ENCODE measurements at regions of chr10 and their contacts with region 1.

Region 1: GRCh38 chr10:72331601-72332422 is 22.9 kb downstream of the DNAJB12 start:
- DNase-seq: peak; percentile 98
- H3K4me3 ChIP-seq: no peak overlapping the region
- H3K27ac ChIP-seq: peak overlapping the region; percentile 98
- H3K4me1 ChIP-seq: peaks cover 82% of the 10 kb centered on the region
- H3K27me3 ChIP-seq: no peaks in the 10 kb centered on the region
- CTCF ChIP-seq: peak in 1 of 2 donors; percentile 34

Region 2: DNA sequence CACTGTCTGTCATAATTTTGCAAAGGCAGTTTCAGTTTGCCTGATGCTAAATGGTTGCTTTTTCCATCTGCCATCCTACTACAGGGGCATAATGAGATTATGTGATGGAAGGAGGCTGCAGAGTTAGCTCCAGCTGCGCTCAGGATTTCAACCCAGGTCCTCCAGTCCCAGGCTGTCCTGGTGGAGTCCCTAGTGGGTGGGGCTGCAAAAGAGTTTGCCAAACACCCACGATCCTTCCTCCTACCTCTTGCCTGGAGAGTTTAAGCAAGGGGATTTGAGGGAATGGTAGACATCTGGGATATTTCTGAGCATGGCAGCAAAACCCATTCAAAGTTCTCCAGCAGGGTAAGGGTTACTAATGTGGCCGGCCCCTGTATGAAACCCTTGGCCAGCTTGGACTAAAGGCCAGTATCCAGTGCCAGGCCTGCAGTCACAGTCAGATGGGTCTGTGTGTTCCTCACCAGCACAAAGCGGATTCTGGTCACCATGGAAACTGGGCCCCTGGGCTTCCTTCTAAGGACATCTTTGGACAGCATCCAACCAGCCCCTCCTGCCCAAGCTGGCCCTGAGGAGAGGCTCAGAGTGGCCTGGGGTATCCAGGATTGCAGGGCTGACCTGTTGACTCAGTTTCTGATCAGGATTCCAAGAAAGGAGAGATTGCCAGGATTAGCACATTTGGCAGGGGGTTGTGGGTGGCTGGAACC is 410.3 kb before region 1 on chr10:
- CTCF ChIA-PET with region 1: no interaction called
- dilution Hi-C with region 1: no loop called
- in situ Hi-C with region 1: loop called in 1 of 2 experiments (anchors 25 kb)
- intact Hi-C with region 1: no loop called
- DNase-seq: no peak
- H3K4me3 ChIP-seq: no peak overlapping the region
- H3K27ac ChIP-seq: no peak overlapping the region
- H3K4me1 ChIP-seq: peaks cover 41% of the 10 kb centered on the region
- H3K27me3 ChIP-seq: no peaks in the 10 kb centered on the region
- CTCF ChIP-seq: no peak

Region 3: DNA sequence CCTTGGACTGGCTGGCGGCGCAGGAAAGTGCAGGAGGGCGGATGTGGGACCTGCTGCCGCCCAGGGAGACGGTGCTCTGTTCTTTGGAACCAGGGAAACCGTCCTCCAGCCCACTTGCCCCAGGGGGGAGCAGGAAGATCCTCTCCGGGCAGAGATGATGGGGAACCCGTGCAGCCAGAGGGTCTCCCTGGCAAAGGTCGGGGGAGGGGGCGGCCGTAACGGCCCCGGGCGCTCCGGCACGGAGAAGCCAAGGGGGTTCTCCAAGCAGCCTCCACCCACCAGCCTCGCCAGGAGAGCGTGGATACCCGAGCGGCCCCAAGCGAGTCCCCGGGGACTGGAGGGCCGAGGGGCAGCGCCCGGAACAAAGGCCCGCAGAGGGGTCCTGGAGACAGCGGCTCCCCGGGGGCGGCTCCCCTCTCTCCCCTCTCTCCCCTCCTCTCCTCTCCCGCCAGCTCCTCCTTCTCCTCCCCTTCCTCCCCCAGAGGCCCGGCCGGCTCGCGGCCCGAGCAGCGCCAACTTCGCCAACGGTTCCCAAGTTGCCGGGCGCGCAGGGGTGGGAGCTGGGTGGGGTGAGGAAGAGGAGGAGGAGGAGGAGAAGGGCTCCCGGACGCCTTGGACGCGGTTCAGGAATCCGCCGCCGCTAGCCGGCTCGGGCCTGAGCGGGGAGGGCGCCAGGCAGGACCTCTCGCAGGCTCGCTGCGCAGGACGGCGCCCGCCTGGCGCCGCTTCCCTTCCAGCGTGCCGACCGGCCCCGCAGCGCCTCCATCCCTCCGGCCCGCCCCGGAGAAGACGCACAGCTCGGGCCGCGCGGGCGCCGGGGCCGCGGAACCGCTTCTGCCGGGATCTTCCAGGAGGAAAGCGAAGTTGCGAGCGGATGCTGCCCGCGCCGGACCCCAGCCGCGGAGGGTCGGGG is 367.8 kb before region 1 on chr10 and contains the start of gene CHST3:
- CTCF ChIA-PET with region 1: no interaction called
- dilution Hi-C with region 1: loop called (anchors 25 kb)
- in situ Hi-C with region 1: no loop called
- intact Hi-C with region 1: loop called (anchors 5 kb)
- DNase-seq: peak; percentile 54
- H3K4me3 ChIP-seq: peak within 1 kb of the TSS; percentile 73 to 85 (median 80)
- H3K27ac ChIP-seq: peak within 1 kb of the TSS; percentile 91
- H3K4me1 ChIP-seq: peaks cover 31% of the 10 kb centered on the region
- H3K27me3 ChIP-seq: no peaks in the 10 kb centered on the region
- CTCF ChIP-seq: no peak
- total RNA-seq, gene CHST3: 32.4 to 85.0 TPM

Region 4: DNA sequence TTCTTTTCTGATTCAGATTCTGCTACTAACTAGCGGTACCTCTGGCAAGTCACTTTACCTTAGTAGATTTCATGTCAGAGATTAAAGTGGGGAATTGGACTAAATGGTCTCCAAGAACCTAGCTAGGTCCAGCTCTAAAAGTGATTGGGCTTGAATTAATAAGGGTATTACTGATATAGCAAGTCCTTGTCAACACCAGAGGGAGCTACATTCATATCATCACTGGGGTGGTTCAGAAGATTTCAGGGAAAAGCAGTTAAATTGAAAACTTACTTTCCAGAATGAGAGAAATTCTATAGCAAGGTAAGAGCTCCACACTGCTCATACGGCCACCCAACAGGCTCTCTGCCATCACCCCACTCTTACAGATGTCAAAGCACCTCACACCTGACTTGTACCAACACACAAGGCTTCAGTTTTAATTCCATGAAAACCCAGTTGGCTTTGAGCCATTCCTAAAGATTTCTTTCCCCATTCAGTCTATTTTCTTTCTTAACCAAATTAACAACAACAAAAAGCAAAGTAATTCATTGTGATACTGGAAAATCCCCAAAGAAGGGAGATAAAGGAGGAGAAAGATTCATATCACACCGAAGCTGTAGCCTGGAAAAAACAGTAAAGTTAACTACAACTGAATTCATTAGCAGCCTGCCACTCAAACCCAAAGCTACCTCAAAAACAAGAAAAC is 205.5 kb before region 1 on chr10:
- CTCF ChIA-PET with region 1: interaction called, 3 read pairs
- dilution Hi-C with region 1: loop called (anchors 25 kb)
- in situ Hi-C with region 1: loop called (anchors 25 kb)
- intact Hi-C with region 1: loop called (anchors 1 kb)
- DNase-seq: peak; percentile 25
- H3K4me3 ChIP-seq: no peak overlapping the region
- H3K27ac ChIP-seq: no peak overlapping the region
- H3K4me1 ChIP-seq: no peaks in the 10 kb centered on the region
- H3K27me3 ChIP-seq: no peaks in the 10 kb centered on the region
- CTCF ChIP-seq: peak; percentile 36 to 51

Region 5: GRCh38 chr10:72223743-72224101 is 108.1 kb before region 1 on chr10:
- CTCF ChIA-PET with region 1: no interaction called
- dilution Hi-C with region 1: no loop called
- in situ Hi-C with region 1: no loop called
- intact Hi-C with region 1: loop called (anchors 1 kb)
- DNase-seq: no peak
- H3K4me3 ChIP-seq: no peak overlapping the region
- H3K27ac ChIP-seq: no peak overlapping the region
- H3K4me1 ChIP-seq: peaks cover 5% of the 10 kb centered on the region
- H3K27me3 ChIP-seq: no peaks in the 10 kb centered on the region
- CTCF ChIP-seq: no peak

Region 6: DNA sequence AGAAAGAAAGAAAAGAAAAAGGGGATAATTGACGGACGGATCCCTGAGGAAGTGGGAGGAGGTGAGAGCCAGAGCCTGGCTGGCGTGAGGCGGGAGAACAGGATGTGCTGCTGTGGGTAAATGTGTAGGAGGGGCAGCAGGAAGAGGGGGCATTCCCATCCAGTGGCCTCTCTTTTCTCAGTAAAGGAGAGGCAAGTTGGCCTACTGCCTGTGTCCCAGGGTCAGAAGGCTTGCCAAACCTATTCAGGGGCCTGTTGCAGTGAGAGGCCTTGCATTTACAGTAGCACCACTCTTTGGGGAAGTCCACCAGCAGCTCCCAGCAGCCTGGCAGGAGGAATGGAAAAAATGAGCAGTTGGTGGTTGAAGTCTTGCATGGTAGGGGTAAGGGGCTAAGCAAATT is 89.1 kb before region 1 on chr10:
- CTCF ChIA-PET with region 1: no interaction called
- dilution Hi-C with region 1: no loop called
- in situ Hi-C with region 1: no loop called
- intact Hi-C with region 1: no loop called
- DNase-seq: no peak
- H3K4me3 ChIP-seq: no peak overlapping the region
- H3K27ac ChIP-seq: peak overlapping the region; percentile 32
- H3K4me1 ChIP-seq: peaks cover 36% of the 10 kb centered on the region
- H3K27me3 ChIP-seq: no peaks in the 10 kb centered on the region
- CTCF ChIP-seq: no peak

Region 7: GRCh38 chr10:72297968-72298773 is 33.6 kb before region 1 on chr10:
- CTCF ChIA-PET with region 1: no interaction called
- dilution Hi-C with region 1: no loop called
- in situ Hi-C with region 1: no loop called
- intact Hi-C with region 1: loop called (anchors 1 kb)
- DNase-seq: peak; percentile 93
- H3K4me3 ChIP-seq: peak overlapping the region; percentile 33 to 53 (median 40)
- H3K27ac ChIP-seq: peak overlapping the region; percentile 94
- H3K4me1 ChIP-seq: peaks cover 25% of the 10 kb centered on the region
- H3K27me3 ChIP-seq: no peaks in the 10 kb centered on the region
- CTCF ChIP-seq: no peak

Region 8: DNA sequence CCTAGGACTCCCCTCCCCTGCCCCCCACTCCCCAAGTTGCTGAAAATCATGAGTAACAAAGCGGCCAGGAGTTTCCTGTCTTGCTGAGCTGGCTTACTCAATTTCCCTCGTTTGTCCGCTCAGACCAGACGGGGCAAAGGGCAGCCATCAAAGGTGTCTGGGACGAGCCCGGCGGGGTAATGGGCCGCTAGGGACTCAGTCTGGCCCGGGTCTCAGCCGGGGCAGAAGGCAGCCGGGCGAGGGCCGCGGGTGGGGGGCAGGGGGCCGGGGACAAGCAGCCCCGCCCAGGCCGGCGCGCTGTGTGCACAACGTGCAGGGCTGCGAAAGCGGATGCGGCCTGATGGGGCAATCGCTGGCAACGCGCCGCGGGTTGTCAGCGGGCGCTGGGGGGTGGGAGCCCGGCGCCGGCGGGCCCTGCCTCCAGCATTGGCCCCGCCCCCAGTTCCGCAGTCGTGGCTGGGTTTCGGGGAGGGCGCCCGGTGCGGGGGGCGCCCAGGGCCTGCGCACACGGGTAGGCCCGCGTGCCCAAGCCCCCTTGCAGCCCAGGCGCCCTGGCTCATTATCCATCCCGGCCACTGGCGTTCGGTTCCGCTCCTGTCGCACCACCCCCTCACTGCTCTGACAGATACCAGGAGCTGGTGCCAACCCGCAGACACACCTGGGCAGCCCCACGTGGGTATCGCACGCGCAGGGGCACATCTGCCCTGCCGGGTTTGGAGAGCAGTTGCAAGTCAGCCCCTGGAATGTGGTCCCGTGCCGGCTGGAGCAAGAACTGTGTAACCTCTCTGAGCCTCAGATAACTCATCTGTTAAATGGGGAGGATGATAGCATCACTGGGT is 12.2 kb before region 1 on chr10:
- CTCF ChIA-PET with region 1: no interaction called
- dilution Hi-C with region 1: no loop called
- in situ Hi-C with region 1: no loop called
- intact Hi-C with region 1: loop called (anchors 1 kb)
- DNase-seq: peak; percentile 99
- H3K4me3 ChIP-seq: peak overlapping the region in 1 of 3 experiments; percentile 33
- H3K27ac ChIP-seq: peak overlapping the region; percentile 99
- H3K4me1 ChIP-seq: peaks cover 77% of the 10 kb centered on the region
- H3K27me3 ChIP-seq: no peaks in the 10 kb centered on the region
- CTCF ChIP-seq: peak in 1 of 2 donors; percentile 5

Measured in mammary epithelial cell (primary cell).